CD4-positive, alpha-beta memory T cell (primary cell): ENCODE measurements at regions of chr10 and their contacts with region 1.

Region 1: DNA sequence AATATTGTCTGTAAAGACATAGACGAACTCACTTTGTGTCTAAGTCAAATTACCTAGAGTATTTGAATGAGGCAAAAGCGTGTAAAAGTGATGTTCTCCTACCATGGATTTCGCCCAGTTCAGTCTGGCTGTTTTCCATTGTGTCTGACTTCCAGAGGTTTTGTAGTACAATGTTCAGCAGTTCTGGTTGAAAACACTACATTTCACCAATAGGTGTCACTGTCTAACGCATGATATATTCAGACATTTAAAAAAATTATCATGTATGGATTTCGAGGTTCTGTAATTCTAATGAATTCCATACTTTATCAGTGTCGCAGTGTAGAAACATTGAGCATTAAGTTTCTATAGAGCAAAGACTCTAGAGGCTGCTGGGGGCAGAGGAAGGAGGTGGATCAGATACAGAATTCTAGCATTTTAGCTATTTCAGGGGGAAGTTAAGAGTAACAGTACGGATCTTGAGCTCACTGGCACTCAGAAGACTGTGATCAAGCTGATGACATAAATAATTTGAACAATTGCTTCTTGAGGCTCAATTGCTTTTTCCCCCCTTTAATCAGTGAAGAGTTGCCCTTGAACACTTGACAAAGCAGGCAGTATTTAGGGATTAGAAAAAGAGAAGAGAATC is 196.9 kb upstream of the RHOBTB1 start:
- DNase-seq: peak in 3 of 5 donors; percentile 16 to 22 (median 21)
- H3K4me3 ChIP-seq: no peak overlapping the region
- H3K4me3 Mint-ChIP-seq: peak overlapping the region in 1 of 8 donors; percentile 51
- H3K27ac ChIP-seq: no peak overlapping the region
- H3K27ac Mint-ChIP-seq: no peak overlapping the region
- H3K4me1 ChIP-seq: no peaks in the 10 kb centered on the region
- H3K4me1 Mint-ChIP-seq: no peaks in the 10 kb centered on the region
- H3K27me3 ChIP-seq: no peaks in the 10 kb centered on the region
- H3K27me3 Mint-ChIP-seq: peaks cover 4 to 5% of the 10 kb centered on the region in 2 donors

Region 2: GRCh38 chr10:61175316-61175715 is 34.4 kb after region 1 on chr10:
- CTCF ChIA-PET with region 1: no interaction called
- POLR2A ChIA-PET with region 1: no interaction called
- intact Hi-C with region 1: no loop called
- DNase-seq: no peak
- H3K4me3 ChIP-seq: no peak overlapping the region
- H3K4me3 Mint-ChIP-seq: no peak overlapping the region
- H3K27ac ChIP-seq: no peak overlapping the region
- H3K27ac Mint-ChIP-seq: no peak overlapping the region
- H3K4me1 ChIP-seq: no peaks in the 10 kb centered on the region
- H3K4me1 Mint-ChIP-seq: no peaks in the 10 kb centered on the region
- H3K27me3 ChIP-seq: no peaks in the 10 kb centered on the region
- H3K27me3 Mint-ChIP-seq: peaks cover 6 to 8% of the 10 kb centered on the region in 2 donors

Region 3: GRCh38 chr10:61284222-61284890 is 143.5 kb after region 1 on chr10:
- CTCF ChIA-PET with region 1: no interaction called
- POLR2A ChIA-PET with region 1: no interaction called
- intact Hi-C with region 1: loop called (anchors 2 kb)
- DNase-seq: peak in 4 of 5 donors; percentile 23 to 42 (median 34)
- H3K4me3 ChIP-seq: no peak overlapping the region
- H3K4me3 Mint-ChIP-seq: peak overlapping the region; percentile 34 to 75 (median 70)
- H3K27ac ChIP-seq: no peak overlapping the region
- H3K27ac Mint-ChIP-seq: peak overlapping the region in 2 of 7 donors; percentile 15 to 31
- H3K4me1 ChIP-seq: peaks cover 19% of the 10 kb centered on the region
- H3K4me1 Mint-ChIP-seq: peaks cover 18 to 27% (median 22%) of the 10 kb centered on the region in 4 donors
- H3K27me3 ChIP-seq: no peaks in the 10 kb centered on the region
- H3K27me3 Mint-ChIP-seq: no peaks in the 10 kb centered on the region